ENCODE measurements at regions of chr15 and their contacts with region 1.

Region 1: DNA sequence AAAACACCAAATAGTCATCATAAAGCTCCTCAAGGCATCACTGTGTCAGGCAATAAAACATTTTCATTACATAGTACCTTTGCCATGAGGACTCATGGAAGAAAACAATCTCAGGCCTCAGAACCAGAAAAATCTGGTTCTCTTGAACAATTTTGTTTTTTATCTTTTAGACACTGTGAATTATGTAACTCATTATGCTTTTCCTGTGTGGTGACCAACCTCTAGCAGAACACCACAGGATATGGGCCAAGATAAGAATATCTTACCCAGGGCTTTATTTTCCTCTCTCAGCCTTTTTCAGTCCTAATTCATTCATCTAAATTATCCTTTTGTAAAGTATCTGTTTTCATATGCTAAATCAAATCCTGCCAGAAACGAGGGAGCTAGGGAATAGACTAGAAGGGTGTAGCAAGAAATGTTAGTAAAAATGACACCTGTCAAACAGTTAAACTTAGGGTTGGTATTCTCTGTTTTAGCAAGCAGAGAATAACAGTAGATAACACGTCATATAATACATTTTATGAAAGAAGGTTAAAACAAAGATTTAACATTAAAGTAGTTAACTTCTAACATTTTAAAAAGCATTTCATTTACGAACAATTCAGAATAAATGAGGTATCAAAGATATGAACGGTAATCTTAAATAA is 111.1 kb downstream of the FBXL22 start:
- DNase-seq: peak; percentile 62 to 82 (median 72)
- H3K4me3 ChIP-seq: no peak overlapping the region
- H3K4me3 Mint-ChIP-seq: peak overlapping the region in 7 of 8 donors; percentile 8 to 78 (median 58)
- H3K27ac ChIP-seq: peak overlapping the region; percentile 62
- H3K27ac Mint-ChIP-seq: peak overlapping the region in 5 of 7 donors; percentile 94 to 97 (median 96)
- H3K4me1 ChIP-seq: peaks cover 42% of the 10 kb centered on the region
- H3K4me1 Mint-ChIP-seq: peaks cover 16 to 28% (median 21%) of the 10 kb centered on the region in 4 donors
- H3K27me3 ChIP-seq: no peaks in the 10 kb centered on the region
- H3K27me3 Mint-ChIP-seq: no peaks in the 10 kb centered on the region

Region 2: GRCh38 chr15:63610200-63610841 is 97.9 kb before region 1 on chr15:
- CTCF ChIA-PET with region 1: interaction called, 5 read pairs
- POLR2A ChIA-PET with region 1: interaction called, 7 read pairs
- intact Hi-C with region 1: loop called (anchors 10 kb)
- DNase-seq: peak; percentile 68 to 85 (median 75)
- H3K4me3 ChIP-seq: no peak overlapping the region
- H3K4me3 Mint-ChIP-seq: peak overlapping the region; percentile 3 to 60 (median 34)
- H3K27ac ChIP-seq: peak overlapping the region; percentile 33
- H3K27ac Mint-ChIP-seq: peak overlapping the region; percentile 27 to 97 (median 93)
- H3K4me1 ChIP-seq: peaks cover 33% of the 10 kb centered on the region
- H3K4me1 Mint-ChIP-seq: peaks cover 27 to 47% (median 39%) of the 10 kb centered on the region in 4 donors
- H3K27me3 ChIP-seq: no peaks in the 10 kb centered on the region
- H3K27me3 Mint-ChIP-seq: no peaks in the 10 kb centered on the region

Region 3: DNA sequence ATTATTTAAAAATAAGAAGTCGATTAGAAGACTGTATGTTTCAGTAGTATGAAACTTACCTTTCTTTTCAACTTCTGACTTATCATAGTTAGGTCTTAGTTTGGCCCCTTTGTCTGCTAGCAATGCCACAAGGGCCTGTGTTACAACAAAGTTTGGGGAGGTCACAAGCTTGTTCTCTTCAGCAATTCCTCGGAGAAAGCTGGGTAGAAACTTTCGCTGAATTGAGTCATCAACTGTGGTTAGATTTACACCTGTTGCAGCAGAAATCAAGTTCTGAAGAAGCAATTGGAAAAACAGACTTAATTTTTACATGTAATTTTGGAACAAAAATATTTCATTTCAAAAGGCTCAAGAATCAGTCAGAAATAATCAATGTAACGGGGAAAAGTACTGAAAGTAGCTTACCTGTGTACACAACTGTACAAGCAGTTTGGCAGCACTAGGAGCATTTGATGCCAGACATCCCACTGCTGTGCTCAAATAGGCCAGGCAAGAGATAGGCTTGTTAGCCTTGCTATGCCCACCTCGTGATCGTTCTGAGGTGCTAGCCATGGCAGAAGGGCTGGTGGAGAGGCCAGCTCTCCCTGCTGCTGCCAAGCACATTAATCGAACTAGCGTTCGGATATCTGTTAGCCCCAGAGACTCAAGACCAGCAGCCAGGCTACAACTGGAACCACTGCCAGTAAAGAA is 52.4 kb before region 1 on chr15:
- CTCF ChIA-PET with region 1: no interaction called
- POLR2A ChIA-PET with region 1: no interaction called
- intact Hi-C with region 1: no loop called
- DNase-seq: no peak
- H3K4me3 ChIP-seq: no peak overlapping the region
- H3K4me3 Mint-ChIP-seq: no peak overlapping the region
- H3K27ac ChIP-seq: no peak overlapping the region
- H3K27ac Mint-ChIP-seq: peak overlapping the region in 3 of 7 donors; percentile 4 to 58 (median 55)
- H3K4me1 ChIP-seq: no peaks in the 10 kb centered on the region
- H3K4me1 Mint-ChIP-seq: peaks cover 0 to 4% (median 2%) of the 10 kb centered on the region in 4 donors
- H3K27me3 ChIP-seq: no peaks in the 10 kb centered on the region
- H3K27me3 Mint-ChIP-seq: no peaks in the 10 kb centered on the region

Region 4: GRCh38 chr15:63668601-63669000 is 39.6 kb before region 1 on chr15:
- CTCF ChIA-PET with region 1: no interaction called
- POLR2A ChIA-PET with region 1: interaction called, 14 read pairs
- intact Hi-C with region 1: loop called (anchors 1 kb)
- DNase-seq: peak in 4 of 5 donors; percentile 30 to 53 (median 48)
- H3K4me3 ChIP-seq: peak overlapping the region in 1 of 2 donors; percentile 17
- H3K4me3 Mint-ChIP-seq: peak overlapping the region; percentile 57 to 90 (median 82)
- H3K27ac ChIP-seq: peak overlapping the region; percentile 56
- H3K27ac Mint-ChIP-seq: peak overlapping the region; percentile 55 to 97 (median 91)
- H3K4me1 ChIP-seq: peaks cover 52% of the 10 kb centered on the region
- H3K4me1 Mint-ChIP-seq: peaks cover 41 to 62% (median 50%) of the 10 kb centered on the region in 4 donors
- H3K27me3 ChIP-seq: no peaks in the 10 kb centered on the region
- H3K27me3 Mint-ChIP-seq: no peaks in the 10 kb centered on the region

Measured in CD4-positive, alpha-beta memory T cell (primary cell).